Tibial artery (tissue), 4 donors: ENCODE measurements at regions of chr12 and their contacts with region 1.

Region 1: DNA sequence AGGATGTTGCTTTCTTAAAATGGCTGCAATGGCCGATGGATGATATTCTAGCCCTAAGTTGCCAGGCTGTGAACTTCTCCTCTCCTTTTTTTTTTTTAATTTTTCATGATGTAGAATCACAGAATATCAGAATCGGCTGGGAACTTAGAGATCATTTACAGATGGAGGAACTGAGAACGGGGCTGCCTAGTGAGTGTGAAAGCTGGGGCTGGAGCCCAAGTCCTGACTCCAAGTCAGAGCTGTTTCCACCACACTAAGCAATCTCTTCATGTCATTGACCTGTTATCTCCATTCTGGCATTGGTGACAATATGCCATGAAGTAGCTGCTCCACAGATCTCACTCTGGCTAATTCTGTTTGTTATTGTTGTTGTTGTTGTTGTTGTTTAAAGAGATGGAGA is 121.7 kb downstream of the SLC38A1 start:
- DNase-seq: no peak
- H3K4me3 ChIP-seq: no peak overlapping the region
- H3K27ac ChIP-seq: no peak overlapping the region
- H3K4me1 ChIP-seq: no peaks in the 10 kb centered on the region
- H3K27me3 ChIP-seq: peaks cover 0 to 3% of the 10 kb centered on the region in 2 donors
- CTCF ChIP-seq: no peak

Region 2: DNA sequence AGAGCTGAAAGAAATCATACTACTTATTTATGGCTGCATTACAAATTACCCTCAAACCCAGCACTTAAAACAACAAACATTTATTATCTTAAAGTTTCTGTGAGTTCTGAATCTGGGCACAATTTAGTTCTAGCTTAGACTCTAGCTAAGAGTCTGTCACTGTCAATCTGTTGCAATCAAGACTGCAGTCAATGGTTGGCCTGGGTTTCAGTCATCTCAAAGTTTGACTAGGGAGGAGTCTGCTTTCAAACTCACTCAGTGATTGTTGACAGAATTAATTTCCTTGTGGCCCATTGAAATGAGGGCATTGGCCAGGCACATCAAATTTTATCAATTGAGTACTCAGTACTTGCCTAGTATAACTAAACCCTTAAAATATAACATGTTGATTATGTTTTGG is 366.1 kb before region 1 on chr12:
- intact Hi-C with region 1: no loop called
- DNase-seq: no peak
- H3K4me3 ChIP-seq: no peak overlapping the region
- H3K27ac ChIP-seq: no peak overlapping the region
- H3K4me1 ChIP-seq: peaks cover 0 to 7% (median 0%) of the 10 kb centered on the region in 4 donors
- H3K27me3 ChIP-seq: no peaks in the 10 kb centered on the region
- CTCF ChIP-seq: no peak

Region 3: GRCh38 chr12:46024099-46024498 is 123.0 kb before region 1 on chr12:
- intact Hi-C with region 1: no loop called
- DNase-seq: no peak
- H3K4me3 ChIP-seq: no peak overlapping the region
- H3K27ac ChIP-seq: no peak overlapping the region
- H3K4me1 ChIP-seq: no peaks in the 10 kb centered on the region
- H3K27me3 ChIP-seq: no peaks in the 10 kb centered on the region
- CTCF ChIP-seq: no peak

Region 4: GRCh38 chr12:46292755-46293402 is 145.7 kb after region 1 on chr12:
- intact Hi-C with region 1: loop called (anchors 10 kb)
- DNase-seq: no peak
- H3K4me3 ChIP-seq: no peak overlapping the region
- H3K27ac ChIP-seq: no peak overlapping the region
- H3K4me1 ChIP-seq: no peaks in the 10 kb centered on the region
- H3K27me3 ChIP-seq: no peaks in the 10 kb centered on the region
- CTCF ChIP-seq: no peak